Dorsolateral prefrontal cortex (tissue), 120 donors: ENCODE measurements at regions of chr10 and their contacts with region 1.

Region 1: GRCh38 chr10:14837757-14838581 is at the starts of genes CDNF, HSPA14 and MSANTD7:
- DNase-seq: peak; percentile 97 to 99 (median 98)
- H3K4me3 ChIP-seq: peak within 1 kb of the TSS; percentile 69 to 100 (median 96)
- H3K27ac ChIP-seq: peak within 1 kb of the TSS; percentile 66 to 99 (median 97)
- H3K27me3 ChIP-seq: no peaks in the 10 kb centered on the region
- CTCF ChIP-seq: peak in 36 of 56 donors; percentile 5 to 56 (median 33)
- total RNA-seq, gene CDNF: 0.33 to 8.1 (median 1.9) TPM in 108 of 120 experiments, not detected in the others
- total RNA-seq, gene HSPA14: 7.8 to 24.7 (median 14.3) TPM
- total RNA-seq, gene MSANTD7: 6.7 to 16.4 (median 11.0) TPM

Region 2: DNA sequence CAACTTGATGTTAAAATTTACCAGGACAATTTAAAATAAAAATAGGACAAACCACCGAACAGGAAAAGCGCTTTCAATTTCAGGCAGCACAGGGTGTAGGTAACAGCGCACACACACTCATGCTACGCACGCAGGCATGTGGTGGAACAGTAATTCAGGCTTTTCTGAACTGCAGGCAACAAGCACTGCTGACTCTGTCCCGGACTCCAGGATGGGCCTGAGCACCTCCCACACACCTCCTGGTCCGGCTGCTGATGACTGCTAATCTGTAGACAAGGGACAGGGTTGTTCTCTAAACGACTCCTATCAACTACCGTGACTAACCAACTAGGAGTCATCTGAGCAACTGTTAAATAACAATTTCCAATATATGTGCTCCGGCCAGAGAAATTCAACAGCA is 314.7 kb before region 1 on chr10:
- intact Hi-C with region 1: no loop called
- DNase-seq: no peak
- H3K4me3 ChIP-seq: no peak overlapping the region
- H3K27ac ChIP-seq: peak overlapping the region in 5 of 59 donors; percentile 19 to 69 (median 59)
- H3K27me3 ChIP-seq: no peaks in the 10 kb centered on the region
- CTCF ChIP-seq: no peak

Region 3: GRCh38 chr10:14878266-14879054 is 40.5 kb after region 1 on chr10 and contains the start of gene SUV39H2:
- intact Hi-C with region 1: loop called (anchors 1 kb)
- DNase-seq: peak; percentile 89 to 98 (median 95)
- H3K4me3 ChIP-seq: peak within 1 kb of the TSS; percentile 67 to 99 (median 94)
- H3K27ac ChIP-seq: peak within 1 kb of the TSS; percentile 2 to 97 (median 92)
- H3K27me3 ChIP-seq: no peaks in the 10 kb centered on the region
- CTCF ChIP-seq: peak in 47 of 56 donors; percentile 12 to 71 (median 45)
- total RNA-seq, gene SUV39H2: 8.9 to 25.2 (median 16.2) TPM

Region 4: GRCh38 chr10:14904316-14904732 is 66.4 kb after region 1 on chr10:
- intact Hi-C with region 1: no loop called
- DNase-seq: no peak
- H3K4me3 ChIP-seq: no peak overlapping the region
- H3K27ac ChIP-seq: no peak overlapping the region
- H3K27me3 ChIP-seq: no peaks in the 10 kb centered on the region
- CTCF ChIP-seq: peak in 52 of 56 donors; percentile 13 to 61 (median 39)

Region 5: GRCh38 chr10:14954001-14954770 is 116.2 kb after region 1 on chr10 and contains the start of gene DCLRE1C:
- intact Hi-C with region 1: loop called in 1 of 2 experiments (anchors 1 kb)
- DNase-seq: peak; percentile 78 to 95 (median 90)
- H3K4me3 ChIP-seq: peak within 1 kb of the TSS; percentile 62 to 99 (median 89)
- H3K27ac ChIP-seq: peak within 1 kb of the TSS in 58 of 59 donors; percentile 18 to 90 (median 75)
- H3K27me3 ChIP-seq: no peaks in the 10 kb centered on the region
- CTCF ChIP-seq: peak in 15 of 56 donors; percentile 2 to 40 (median 11)
- total RNA-seq, gene DCLRE1C: 4.4 to 22.8 (median 8.8) TPM